Activated CD4-positive, alpha-beta memory T cell treated with anti-CD3 and anti-CD28 coated beads for 36 hours (primary cell): ENCODE measurements at regions of chr3 and their contacts with region 1.

Region 1: GRCh38 chr3:108090701-108091451 is at the start of gene CD47:
- DNase-seq: peak; percentile 97
- H3K4me3 Mint-ChIP-seq: peak within 1 kb of the TSS; percentile 93
- H3K27ac Mint-ChIP-seq: peak within 1 kb of the TSS; percentile 95
- H3K4me1 Mint-ChIP-seq: peaks cover 30% of the 10 kb centered on the region
- H3K27me3 Mint-ChIP-seq: no peaks in the 10 kb centered on the region
- total RNA-seq, gene CD47: 122 to 124 TPM

Region 2: DNA sequence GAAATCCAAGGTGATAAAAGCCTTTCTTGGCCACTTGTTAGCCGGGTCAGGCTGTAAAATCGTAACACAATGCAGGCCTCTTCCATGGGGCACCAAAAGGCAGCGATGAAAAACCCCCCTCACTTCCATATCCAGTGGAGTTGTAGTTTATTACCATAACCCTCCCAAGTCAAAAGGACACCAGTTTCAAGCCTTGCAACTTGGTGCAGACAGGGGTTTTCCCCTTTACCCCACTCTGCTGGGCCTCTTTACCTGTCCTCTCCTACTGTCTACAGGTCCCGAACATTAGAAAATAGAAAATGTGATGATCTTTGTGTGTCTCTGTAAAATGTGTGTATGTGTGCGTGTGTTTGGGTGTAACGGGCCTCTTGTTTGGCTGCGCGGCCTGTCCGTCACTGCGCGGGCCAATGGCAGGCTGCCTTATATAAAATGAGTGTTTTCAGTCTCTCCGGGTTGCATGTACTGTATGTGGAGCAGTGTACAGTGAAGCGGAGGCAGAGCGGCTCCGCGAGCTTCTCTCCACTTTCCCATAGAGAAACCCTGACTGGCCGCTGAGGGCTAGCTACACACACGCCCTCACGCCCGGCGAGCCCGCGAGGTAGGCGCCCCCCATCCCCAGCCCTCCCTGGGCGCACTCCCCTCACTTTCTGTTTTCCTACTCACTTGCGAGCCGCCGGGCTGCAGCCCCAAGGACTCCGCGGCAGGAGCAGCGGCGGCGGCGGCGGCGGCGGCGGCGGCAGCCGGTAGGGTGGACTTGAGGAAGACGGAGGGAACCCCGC is 568.2 kb before region 1 on chr3 and contains the start of gene BBX:
- CTCF ChIA-PET with region 1: no interaction called
- POLR2A ChIA-PET with region 1: no interaction called
- intact Hi-C with region 1: loop called (anchors 2 kb)
- DNase-seq: peak; percentile 96
- H3K4me3 Mint-ChIP-seq: peak within 1 kb of the TSS; percentile 94
- H3K27ac Mint-ChIP-seq: peak within 1 kb of the TSS; percentile 95
- H3K4me1 Mint-ChIP-seq: peaks cover 23% of the 10 kb centered on the region
- H3K27me3 Mint-ChIP-seq: no peaks in the 10 kb centered on the region
- total RNA-seq, gene BBX: 39.9 to 40.9 TPM

Region 3: DNA sequence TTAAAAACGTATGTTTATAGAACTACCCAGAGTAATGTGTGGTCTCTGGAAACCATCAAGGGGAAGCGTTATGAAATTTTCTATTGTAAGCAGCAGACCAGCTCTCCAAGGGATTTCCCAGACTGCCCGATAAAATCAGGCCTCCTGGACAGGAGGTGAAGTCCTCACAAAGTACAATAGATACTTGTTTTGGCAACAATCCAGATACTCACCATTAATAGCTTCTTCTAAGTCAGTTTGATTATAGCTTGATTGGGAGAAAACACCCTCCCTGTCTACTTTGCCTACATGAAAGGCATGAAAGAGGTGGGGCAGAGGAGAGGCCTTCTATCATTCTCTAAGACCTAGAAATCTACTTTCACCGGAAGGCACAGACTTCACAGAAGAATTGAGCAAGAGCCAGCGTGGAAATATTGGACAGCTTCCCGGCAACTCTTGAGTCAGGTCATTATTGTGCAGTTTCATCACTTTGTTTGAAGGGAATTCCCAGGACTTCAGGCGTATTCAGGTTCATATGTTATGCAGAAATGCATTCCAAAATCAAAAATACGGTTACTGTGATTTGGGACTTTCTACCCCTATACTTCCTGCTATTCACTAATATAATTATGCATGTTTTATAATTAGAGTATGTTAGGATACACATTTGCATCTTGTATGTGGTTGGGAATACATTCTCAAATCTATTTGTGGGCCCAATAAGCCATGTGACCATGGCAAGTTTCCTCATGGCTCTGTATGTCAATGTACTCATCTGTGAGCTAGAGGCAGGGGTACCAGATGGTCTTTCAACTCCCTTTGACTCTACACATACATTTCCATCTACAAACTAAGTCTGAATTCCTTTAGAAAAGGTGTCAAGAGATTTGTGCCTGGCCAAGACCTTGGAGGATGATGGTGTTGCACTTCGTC is 103.6 kb before region 1 on chr3:
- CTCF ChIA-PET with region 1: no interaction called
- POLR2A ChIA-PET with region 1: no interaction called
- intact Hi-C with region 1: loop called (anchors 5 kb)
- DNase-seq: no peak
- H3K4me3 Mint-ChIP-seq: no peak overlapping the region
- H3K27ac Mint-ChIP-seq: no peak overlapping the region
- H3K4me1 Mint-ChIP-seq: peaks cover 32% of the 10 kb centered on the region
- H3K27me3 Mint-ChIP-seq: no peaks in the 10 kb centered on the region

Region 4: DNA sequence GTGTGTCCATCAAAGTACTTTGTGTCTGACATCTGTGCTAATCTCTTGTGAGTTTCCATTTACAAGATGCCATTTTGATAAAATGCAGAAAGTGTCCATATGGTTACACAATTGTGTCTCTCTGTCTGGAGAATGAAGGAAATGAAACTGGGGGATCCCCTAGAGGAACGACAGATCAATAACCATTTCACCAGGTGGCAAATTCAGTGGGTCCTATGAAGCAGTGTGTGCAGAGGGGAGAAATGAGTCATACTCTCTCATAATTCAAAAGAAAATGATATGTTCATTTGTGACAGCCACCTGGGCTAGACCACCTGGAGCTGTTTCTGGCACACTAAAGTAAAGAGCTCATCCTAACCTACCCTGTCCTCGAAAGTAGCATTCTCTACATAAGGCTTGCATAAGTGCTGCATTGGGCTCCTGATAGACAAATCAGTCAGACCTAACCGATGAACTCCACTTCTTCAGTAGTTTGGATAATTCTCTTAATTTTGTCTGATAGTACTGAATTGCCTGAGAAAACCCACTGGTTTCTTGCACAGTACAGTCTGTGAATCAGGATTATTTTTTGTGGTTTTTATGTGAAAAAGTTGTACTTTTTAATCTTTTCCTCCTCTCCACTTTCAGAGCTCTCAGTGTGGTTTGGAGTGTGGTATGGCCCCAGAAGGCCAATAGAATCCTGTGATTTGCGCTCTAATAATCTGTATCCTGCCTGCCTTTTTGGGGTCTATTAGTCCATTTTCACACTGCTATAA is 10.2 kb after region 1 on chr3:
- CTCF ChIA-PET with region 1: no interaction called
- POLR2A ChIA-PET with region 1: interaction called, 4 read pairs
- intact Hi-C with region 1: loop called (anchors 1 kb)
- DNase-seq: peak; percentile 54
- H3K4me3 Mint-ChIP-seq: peak overlapping the region; percentile 20
- H3K27ac Mint-ChIP-seq: peak overlapping the region; percentile 24
- H3K4me1 Mint-ChIP-seq: peaks cover 33% of the 10 kb centered on the region
- H3K27me3 Mint-ChIP-seq: no peaks in the 10 kb centered on the region

Region 5: DNA sequence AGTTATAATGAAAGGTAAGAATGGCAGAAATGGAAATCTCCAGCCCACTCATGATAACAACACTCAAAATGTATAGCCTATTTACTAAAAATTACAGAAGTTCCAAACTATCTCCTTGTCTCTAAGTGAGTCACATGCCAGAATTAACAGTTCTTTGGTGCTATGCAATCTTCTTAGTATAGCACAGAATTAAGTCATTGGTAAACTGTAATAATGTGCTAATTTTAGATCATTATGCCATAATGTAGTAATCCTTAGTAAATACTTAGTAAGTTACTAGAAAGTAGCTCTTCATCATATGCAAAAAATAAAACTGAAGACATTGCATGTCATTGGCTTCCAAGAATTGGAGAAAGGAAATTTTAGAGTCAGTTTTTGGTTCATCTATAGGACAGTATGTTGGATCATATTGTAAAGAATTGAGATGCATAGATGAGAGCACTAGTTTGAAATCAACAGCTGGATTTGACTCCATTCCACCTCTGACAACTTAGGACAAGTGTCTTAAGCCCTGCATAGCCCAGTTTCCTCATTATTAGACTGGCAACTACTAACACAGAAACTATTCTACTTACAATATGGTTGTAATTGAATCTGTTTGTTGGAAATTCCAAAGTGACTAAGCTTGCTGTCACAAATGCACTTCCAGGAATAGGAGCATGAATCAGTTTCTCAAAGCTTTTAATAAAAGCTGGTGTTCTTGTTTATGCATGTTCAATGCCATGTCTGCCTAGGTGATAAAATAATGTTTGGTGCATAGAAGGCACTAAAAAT is 40.0 kb after region 1 on chr3:
- CTCF ChIA-PET with region 1: interaction called, 7 read pairs
- POLR2A ChIA-PET with region 1: interaction called, 147 read pairs
- intact Hi-C with region 1: no loop called
- DNase-seq: no peak
- H3K4me3 Mint-ChIP-seq: peak overlapping the region; percentile 33
- H3K27ac Mint-ChIP-seq: peak overlapping the region; percentile 85
- H3K4me1 Mint-ChIP-seq: peaks cover 88% of the 10 kb centered on the region
- H3K27me3 Mint-ChIP-seq: no peaks in the 10 kb centered on the region

Region 6: DNA sequence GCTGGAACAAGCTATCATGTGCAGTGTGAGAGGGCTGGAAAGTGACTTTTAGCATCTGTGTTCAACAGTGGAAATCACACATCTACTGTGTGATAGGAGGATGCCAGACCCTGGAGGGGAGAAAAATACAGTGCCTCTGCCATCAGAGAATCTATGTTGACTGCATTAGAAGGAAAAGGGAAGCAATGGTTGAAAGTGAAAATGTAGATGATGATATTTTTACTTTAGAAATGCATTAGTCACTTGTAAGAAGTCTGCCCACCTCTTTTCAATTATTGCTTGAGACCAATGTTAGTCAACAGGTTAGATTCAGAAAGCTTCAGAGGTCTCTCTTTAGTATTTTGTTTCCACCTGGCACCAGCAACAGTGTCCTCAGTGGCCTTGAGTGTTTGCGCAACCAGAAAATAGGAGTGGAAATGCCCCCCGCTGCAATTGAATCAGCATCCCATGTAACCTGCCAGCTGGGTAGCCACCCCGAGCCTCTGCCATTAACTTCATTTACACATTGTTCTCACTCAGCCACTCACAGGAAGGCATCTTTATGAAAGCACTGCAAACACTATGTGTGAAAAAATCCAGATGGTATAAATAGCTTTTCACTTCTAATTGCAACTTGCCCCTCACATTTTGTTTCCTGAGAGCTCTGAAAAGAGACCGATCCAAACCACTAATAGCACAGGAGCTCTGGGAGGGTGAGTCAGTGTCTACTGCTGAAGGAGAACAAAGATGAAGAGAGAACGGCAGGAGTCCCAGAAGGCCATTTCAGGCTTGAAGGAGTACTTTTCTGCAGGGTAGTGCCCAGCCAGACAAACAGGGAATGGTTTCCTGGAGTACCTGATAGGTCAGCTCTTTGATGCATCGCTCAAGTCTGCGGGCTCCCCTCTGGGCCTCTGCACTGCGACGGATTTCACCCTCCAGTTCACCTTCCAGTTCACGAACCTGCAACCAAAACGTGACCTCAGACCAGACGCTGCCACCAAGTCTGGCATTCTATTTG is 297.6 kb after region 1 on chr3:
- CTCF ChIA-PET with region 1: no interaction called
- POLR2A ChIA-PET with region 1: no interaction called
- intact Hi-C with region 1: loop called (anchors 2 kb)
- DNase-seq: peak; percentile 25
- H3K4me3 Mint-ChIP-seq: no peak overlapping the region
- H3K27ac Mint-ChIP-seq: no peak overlapping the region
- H3K4me1 Mint-ChIP-seq: peaks cover 19% of the 10 kb centered on the region
- H3K27me3 Mint-ChIP-seq: peaks cover 16% of the 10 kb centered on the region

Region 7: DNA sequence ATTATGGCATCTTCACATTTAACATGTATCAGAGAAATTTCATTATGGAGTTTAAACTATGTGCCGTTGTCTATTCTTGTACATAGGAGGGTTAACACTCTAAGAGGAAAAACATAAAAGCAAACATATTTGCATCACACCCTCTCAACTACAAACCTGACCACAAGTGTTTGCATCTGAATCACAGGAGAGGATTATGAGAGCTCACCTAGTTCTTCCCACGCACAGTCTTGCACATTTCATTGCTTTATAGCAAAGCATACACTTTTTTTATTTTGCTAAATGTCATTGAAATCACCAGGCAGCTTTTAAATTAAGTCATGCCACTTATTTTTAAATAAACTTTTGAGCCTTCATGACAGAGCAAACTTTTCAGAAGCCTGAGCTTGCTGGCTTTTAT is 744.2 kb after region 1 on chr3:
- CTCF ChIA-PET with region 1: no interaction called
- POLR2A ChIA-PET with region 1: no interaction called
- intact Hi-C with region 1: loop called (anchors 5 kb)
- DNase-seq: peak; percentile 49
- H3K4me3 Mint-ChIP-seq: peak overlapping the region; percentile 77
- H3K27ac Mint-ChIP-seq: peak overlapping the region; percentile 93
- H3K4me1 Mint-ChIP-seq: peaks cover 79% of the 10 kb centered on the region
- H3K27me3 Mint-ChIP-seq: no peaks in the 10 kb centered on the region